CD4-positive, alpha-beta memory T cell (primary cell): ENCODE measurements at regions of chr6 and their contacts with region 1.

Region 1: DNA sequence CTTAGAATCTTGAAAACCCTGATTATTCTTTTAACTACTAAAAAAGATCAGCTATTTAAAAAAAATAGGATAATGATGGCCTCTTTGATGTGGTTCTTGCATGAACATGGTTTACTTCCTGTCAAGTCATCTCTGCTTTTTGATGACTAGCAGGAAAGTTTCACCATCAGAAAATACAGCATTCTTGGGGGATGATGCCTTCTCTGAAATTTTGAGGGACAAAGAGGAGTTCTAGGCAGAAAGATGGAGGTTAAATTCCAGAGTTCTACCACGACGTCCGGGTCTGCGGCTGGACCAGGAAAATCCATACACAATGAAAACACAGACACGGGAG is 130.4 kb downstream of the OLIG3 start:
- DNase-seq: peak in 4 of 5 donors; percentile 62 to 74 (median 69)
- H3K4me3 ChIP-seq: no peak overlapping the region
- H3K4me3 Mint-ChIP-seq: peak overlapping the region; percentile 7 to 77 (median 68)
- H3K27ac ChIP-seq: no peak overlapping the region
- H3K27ac Mint-ChIP-seq: peak overlapping the region in 6 of 7 donors; percentile 12 to 90 (median 72)
- H3K4me1 ChIP-seq: peaks cover 27% of the 10 kb centered on the region
- H3K4me1 Mint-ChIP-seq: peaks cover 26 to 38% (median 32%) of the 10 kb centered on the region in 4 donors
- H3K27me3 ChIP-seq: no peaks in the 10 kb centered on the region
- H3K27me3 Mint-ChIP-seq: no peaks in the 10 kb centered on the region

Region 2: DNA sequence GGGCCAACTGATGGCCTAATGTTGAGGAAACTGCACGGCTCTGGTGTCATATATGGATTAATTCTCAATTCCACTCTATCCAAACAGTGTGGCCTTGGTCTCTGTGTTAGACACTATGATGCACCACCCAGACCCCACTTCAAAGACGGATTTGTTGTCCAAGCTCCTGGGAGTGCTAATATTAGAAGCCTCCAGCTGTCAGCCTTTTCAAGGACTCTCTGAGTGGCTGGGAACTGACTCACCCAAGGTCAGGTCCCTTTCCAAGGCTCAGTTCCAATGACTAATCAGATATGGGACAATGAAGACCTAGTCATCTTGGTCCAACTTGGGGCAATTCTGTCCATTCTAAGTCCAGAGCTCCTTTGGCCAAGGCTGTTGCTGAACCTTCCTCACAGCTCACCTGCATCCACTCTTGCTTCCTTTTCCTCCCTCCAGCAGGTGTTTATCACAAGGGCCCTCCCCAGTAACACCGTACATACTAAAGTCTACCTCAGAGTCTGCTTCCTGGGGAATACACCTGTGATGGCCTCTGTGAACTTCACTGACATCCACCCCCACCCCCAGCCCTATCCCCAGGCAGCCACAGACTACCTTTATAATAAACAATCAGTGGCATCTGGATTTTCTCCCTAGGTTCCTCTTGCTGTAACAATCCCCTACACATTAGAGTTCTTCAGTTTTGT is 311.8 kb before region 1 on chr6:
- CTCF ChIA-PET with region 1: no interaction called
- POLR2A ChIA-PET with region 1: no interaction called
- intact Hi-C with region 1: no loop called
- DNase-seq: no peak
- H3K4me3 ChIP-seq: no peak overlapping the region
- H3K4me3 Mint-ChIP-seq: no peak overlapping the region
- H3K27ac ChIP-seq: no peak overlapping the region
- H3K27ac Mint-ChIP-seq: no peak overlapping the region
- H3K4me1 ChIP-seq: no peaks in the 10 kb centered on the region
- H3K4me1 Mint-ChIP-seq: no peaks in the 10 kb centered on the region
- H3K27me3 ChIP-seq: peaks cover 4% of the 10 kb centered on the region
- H3K27me3 Mint-ChIP-seq: peaks cover 34 to 36% of the 10 kb centered on the region in 2 donors

Region 3: GRCh38 chr6:137351890-137352289 is 11.9 kb before region 1 on chr6:
- CTCF ChIA-PET with region 1: no interaction called
- POLR2A ChIA-PET with region 1: interaction called, 13 read pairs
- intact Hi-C with region 1: no loop called
- DNase-seq: no peak
- H3K4me3 ChIP-seq: no peak overlapping the region
- H3K4me3 Mint-ChIP-seq: no peak overlapping the region
- H3K27ac ChIP-seq: no peak overlapping the region
- H3K27ac Mint-ChIP-seq: peak overlapping the region in 4 of 7 donors; percentile 25 to 81 (median 29)
- H3K4me1 ChIP-seq: peaks cover 15% of the 10 kb centered on the region
- H3K4me1 Mint-ChIP-seq: peaks cover 12 to 22% (median 21%) of the 10 kb centered on the region in 4 donors
- H3K27me3 ChIP-seq: no peaks in the 10 kb centered on the region
- H3K27me3 Mint-ChIP-seq: no peaks in the 10 kb centered on the region

Region 4: GRCh38 chr6:137776786-137777686 is 413.3 kb after region 1 on chr6:
- CTCF ChIA-PET with region 1: no interaction called
- POLR2A ChIA-PET with region 1: no interaction called
- intact Hi-C with region 1: no loop called
- DNase-seq: no peak
- H3K4me3 ChIP-seq: no peak overlapping the region
- H3K4me3 Mint-ChIP-seq: no peak overlapping the region
- H3K27ac ChIP-seq: no peak overlapping the region
- H3K27ac Mint-ChIP-seq: peak overlapping the region in 2 of 7 donors; percentile 60 to 66
- H3K4me1 ChIP-seq: no peaks in the 10 kb centered on the region
- H3K4me1 Mint-ChIP-seq: peaks cover 0 to 4% (median 0%) of the 10 kb centered on the region in 4 donors
- H3K27me3 ChIP-seq: no peaks in the 10 kb centered on the region
- H3K27me3 Mint-ChIP-seq: no peaks in the 10 kb centered on the region